Body of pancreas (tissue), 4 donors: ENCODE measurements at regions of chrX and their contacts with region 1.

Region 1: GRCh38 chrX:130024127-130024526 is 41.7 kb downstream of the BCORL1 start:
- DNase-seq: peak; percentile 51 to 78 (median 65)
- ATAC-seq: peak; percentile 38
- H3K4me3 ChIP-seq: no peak overlapping the region
- H3K27ac ChIP-seq: no peak overlapping the region
- H3K4me1 ChIP-seq: no peaks in the 10 kb centered on the region
- H3K27me3 ChIP-seq: no peaks in the 10 kb centered on the region
- CTCF ChIP-seq: no peak
- POLR2A ChIP-seq: no peak

Region 2: GRCh38 chrX:129925305-129926092 is 98.6 kb before region 1 on chrX:
- intact Hi-C with region 1: loop called (anchors 10 kb)
- DNase-seq: peak; percentile 68 to 74 (median 69)
- ATAC-seq: peak; percentile 72
- H3K4me3 ChIP-seq: no peak overlapping the region
- H3K27ac ChIP-seq: no peak overlapping the region
- H3K4me1 ChIP-seq: no peaks in the 10 kb centered on the region
- H3K27me3 ChIP-seq: no peaks in the 10 kb centered on the region
- CTCF ChIP-seq: peak; percentile 17 to 69 (median 63)
- POLR2A ChIP-seq: no peak